ENCODE measurements at regions of chr19 and their contacts with region 1.

Region 1: DNA sequence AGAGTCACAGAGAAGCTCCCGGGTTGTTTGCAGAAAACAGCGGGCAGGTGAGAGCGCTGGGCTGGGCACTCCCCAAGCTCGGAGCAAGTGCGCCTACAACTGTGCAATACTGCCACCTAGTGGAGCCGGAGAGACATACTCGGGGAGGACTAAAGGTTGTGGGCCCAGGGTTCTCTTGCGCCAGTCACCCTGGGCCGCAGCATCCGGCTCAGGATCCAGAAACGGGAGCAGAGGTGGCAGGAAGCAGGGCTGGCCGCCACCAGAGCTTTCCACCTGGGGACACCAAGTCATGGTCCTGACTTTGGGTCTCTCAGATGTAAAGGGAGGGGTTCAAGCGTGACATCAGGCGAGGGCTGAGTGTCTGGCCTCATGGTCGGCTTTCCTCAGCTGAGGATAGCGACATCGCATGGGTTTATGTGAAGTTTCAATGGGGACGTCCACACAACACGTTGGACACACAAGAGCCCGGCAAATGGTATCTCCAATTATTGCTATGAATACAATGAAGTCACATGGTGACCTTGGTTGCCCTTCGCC is 11.2 kb upstream of the KLK4 start:
- DNase-seq: peak; percentile 77 to 80
- H3K4me3 ChIP-seq: peak overlapping the region; percentile 36; the same call in 1 of the 2 replicates
- H3K27ac ChIP-seq: peak overlapping the region; percentile 32
- H3K4me1 ChIP-seq: peaks cover 37% of the 10 kb centered on the region
- H3K27me3 ChIP-seq: 0 out of 2 replicates have a peak, but pooled peaks cover under 1% of the 10 kb centered on the region
- CTCF ChIP-seq: peak; percentile 96

Region 2: DNA sequence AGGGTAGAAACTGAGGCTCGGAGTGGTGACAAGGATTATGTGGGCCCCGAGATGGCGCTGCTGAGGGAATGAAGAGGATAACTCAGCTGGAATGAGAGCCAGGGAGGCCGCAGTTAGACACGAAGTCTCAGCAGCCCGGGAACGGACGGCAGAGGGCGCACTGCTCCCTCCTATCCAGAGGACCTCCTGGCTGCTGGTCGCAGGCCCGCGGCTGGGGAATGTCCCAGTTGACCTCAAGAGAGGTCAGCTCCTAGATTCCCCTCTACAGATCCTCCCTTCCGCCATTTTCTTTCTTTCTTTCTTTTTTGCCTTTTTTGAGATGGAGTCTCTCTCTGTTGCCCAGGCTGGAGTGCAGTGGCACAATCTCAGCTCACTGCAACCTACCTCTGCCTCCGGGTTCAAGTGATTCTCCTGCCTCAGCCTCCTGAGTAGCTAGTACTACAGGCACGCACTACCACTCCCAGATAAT is 384.6 kb before region 1 on chr19:
- CTCF ChIA-PET with region 1: no interaction called
- POLR2A ChIA-PET with region 1: no interaction called
- intact Hi-C with region 1: loop called (anchors 10 kb)
- DNase-seq: peak; percentile 66 to 79
- H3K4me3 ChIP-seq: no peak overlapping the region
- H3K27ac ChIP-seq: no peak overlapping the region
- H3K4me1 ChIP-seq: no peaks in the 10 kb centered on the region
- H3K27me3 ChIP-seq: peaks cover 71% of the 10 kb centered on the region
- CTCF ChIP-seq: peak; percentile 86

Region 3: DNA sequence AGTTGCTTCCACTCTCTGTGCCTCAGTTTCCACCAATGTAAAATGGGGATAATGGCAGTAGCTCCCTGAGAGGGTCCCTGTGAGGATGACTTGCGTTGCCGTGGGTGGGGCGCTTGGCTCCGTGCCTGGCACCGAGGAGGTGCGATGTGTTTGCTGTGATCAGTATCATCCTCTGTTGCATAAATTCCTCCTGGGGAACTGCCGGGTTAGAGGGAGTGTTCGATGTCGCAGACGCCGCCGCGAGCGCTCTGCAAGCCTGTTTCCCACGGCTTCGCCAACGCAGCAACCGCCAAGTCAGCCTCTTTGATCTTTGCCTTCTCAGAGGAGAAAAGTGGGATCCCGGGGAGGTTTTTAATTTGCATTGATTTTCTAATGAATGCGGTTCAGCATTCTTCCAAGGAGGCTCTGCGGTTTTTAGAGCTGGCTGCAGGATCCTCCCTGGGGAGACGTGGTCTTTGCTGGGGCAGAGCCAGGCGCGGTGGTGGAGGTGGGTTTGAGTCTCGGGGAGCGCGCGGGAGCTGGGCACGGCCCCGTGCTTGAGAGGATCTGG is 144.6 kb before region 1 on chr19:
- CTCF ChIA-PET with region 1: interaction called, 11 read pairs
- POLR2A ChIA-PET with region 1: no interaction called
- intact Hi-C with region 1: no loop called
- DNase-seq: no peak
- H3K4me3 ChIP-seq: no peak overlapping the region
- H3K27ac ChIP-seq: no peak overlapping the region
- H3K4me1 ChIP-seq: no peaks in the 10 kb centered on the region
- H3K27me3 ChIP-seq: peaks cover 91% of the 10 kb centered on the region
- CTCF ChIP-seq: no peak

Region 4: GRCh38 chr19:50880241-50880640 is 42.1 kb before region 1 on chr19:
- CTCF ChIA-PET with region 1: interaction called, 10 read pairs
- POLR2A ChIA-PET with region 1: no interaction called
- intact Hi-C with region 1: no loop called
- DNase-seq: no peak
- H3K4me3 ChIP-seq: no peak overlapping the region
- H3K27ac ChIP-seq: no peak overlapping the region
- H3K4me1 ChIP-seq: no peaks in the 10 kb centered on the region
- H3K27me3 ChIP-seq: peaks cover 91% of the 10 kb centered on the region
- CTCF ChIP-seq: no peak

Measured in PC-9 (cell line).